ENCODE measurements at regions of chr1 and their contacts with region 1.

Region 1: GRCh38 chr1:181189691-181190363 is 101.3 kb downstream of the IER5 start:
- DNase-seq: peak; percentile 35 to 85 (median 73)
- ATAC-seq: peak; percentile 96
- H3K4me3 ChIP-seq: peak overlapping the region; percentile 20
- H3K4me3 Mint-ChIP-seq: peak overlapping the region; percentile 34
- H3K27ac ChIP-seq: no peak overlapping the region
- H3K27ac Mint-ChIP-seq: no peak overlapping the region
- H3K4me1 ChIP-seq: peaks cover 12% of the 10 kb centered on the region
- H3K4me1 Mint-ChIP-seq: no peaks in the 10 kb centered on the region
- H3K27me3 ChIP-seq: no peaks in the 10 kb centered on the region
- H3K27me3 Mint-ChIP-seq: peaks cover 26% of the 10 kb centered on the region
- CTCF ChIP-seq: peak; percentile 94

Region 2: GRCh38 chr1:180805316-180805715 is 384.5 kb before region 1 on chr1:
- CTCF ChIA-PET with region 1: no interaction called
- POLR2A ChIA-PET with region 1: no interaction called
- intact Hi-C with region 1: no loop called
- DNase-seq: no peak
- ATAC-seq: no peak
- H3K4me3 ChIP-seq: no peak overlapping the region
- H3K4me3 Mint-ChIP-seq: no peak overlapping the region
- H3K27ac ChIP-seq: no peak overlapping the region
- H3K27ac Mint-ChIP-seq: no peak overlapping the region
- H3K4me1 ChIP-seq: no peaks in the 10 kb centered on the region
- H3K4me1 Mint-ChIP-seq: no peaks in the 10 kb centered on the region
- H3K27me3 ChIP-seq: no peaks in the 10 kb centered on the region
- H3K27me3 Mint-ChIP-seq: no peaks in the 10 kb centered on the region
- CTCF ChIP-seq: no peak

Region 3: GRCh38 chr1:181324797-181325616 is 135.2 kb after region 1 on chr1:
- CTCF ChIA-PET with region 1: no interaction called
- POLR2A ChIA-PET with region 1: no interaction called
- intact Hi-C with region 1: loop called in 1 of 2 experiments (anchors 10 kb)
- DNase-seq: peak in 8 of 14 experiments; percentile 8 to 44 (median 30)
- ATAC-seq: peak; percentile 26
- H3K4me3 ChIP-seq: no peak overlapping the region
- H3K4me3 Mint-ChIP-seq: no peak overlapping the region
- H3K27ac ChIP-seq: no peak overlapping the region
- H3K27ac Mint-ChIP-seq: no peak overlapping the region
- H3K4me1 ChIP-seq: peaks cover 7% of the 10 kb centered on the region
- H3K4me1 Mint-ChIP-seq: no peaks in the 10 kb centered on the region
- H3K27me3 ChIP-seq: peaks cover 0 to 10% of the 10 kb centered on the region in 2 experiments
- H3K27me3 Mint-ChIP-seq: peaks cover 4% of the 10 kb centered on the region
- CTCF ChIP-seq: no peak

Region 4: DNA sequence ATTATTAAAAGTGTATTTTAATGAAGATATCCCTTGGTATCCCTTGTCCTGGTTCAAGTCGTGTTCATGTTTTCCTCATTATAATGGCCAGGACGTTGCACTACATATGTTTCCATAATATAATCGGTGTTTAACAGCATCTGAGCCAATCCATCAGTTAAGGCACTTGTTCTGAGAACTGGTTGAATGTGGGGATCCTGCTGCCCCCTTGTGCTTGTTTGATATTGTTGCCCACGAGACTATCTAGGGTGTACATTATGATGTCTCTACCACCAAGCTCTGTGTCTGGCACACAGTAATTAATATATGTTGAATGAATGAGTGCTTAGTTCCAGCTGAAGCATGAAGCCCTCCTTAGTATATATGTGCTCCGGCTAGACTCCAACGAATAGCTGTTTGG is 486.4 kb after region 1 on chr1:
- CTCF ChIA-PET with region 1: no interaction called
- POLR2A ChIA-PET with region 1: no interaction called
- intact Hi-C with region 1: loop called in 1 of 2 experiments (anchors 5 kb)
- DNase-seq: no peak
- ATAC-seq: no peak
- H3K4me3 ChIP-seq: no peak overlapping the region
- H3K4me3 Mint-ChIP-seq: no peak overlapping the region
- H3K27ac ChIP-seq: no peak overlapping the region
- H3K27ac Mint-ChIP-seq: no peak overlapping the region
- H3K4me1 ChIP-seq: no peaks in the 10 kb centered on the region
- H3K4me1 Mint-ChIP-seq: no peaks in the 10 kb centered on the region
- H3K27me3 ChIP-seq: peaks cover 5 to 13% of the 10 kb centered on the region in 2 experiments
- H3K27me3 Mint-ChIP-seq: peaks cover 28% of the 10 kb centered on the region
- CTCF ChIP-seq: no peak

Region 5: DNA sequence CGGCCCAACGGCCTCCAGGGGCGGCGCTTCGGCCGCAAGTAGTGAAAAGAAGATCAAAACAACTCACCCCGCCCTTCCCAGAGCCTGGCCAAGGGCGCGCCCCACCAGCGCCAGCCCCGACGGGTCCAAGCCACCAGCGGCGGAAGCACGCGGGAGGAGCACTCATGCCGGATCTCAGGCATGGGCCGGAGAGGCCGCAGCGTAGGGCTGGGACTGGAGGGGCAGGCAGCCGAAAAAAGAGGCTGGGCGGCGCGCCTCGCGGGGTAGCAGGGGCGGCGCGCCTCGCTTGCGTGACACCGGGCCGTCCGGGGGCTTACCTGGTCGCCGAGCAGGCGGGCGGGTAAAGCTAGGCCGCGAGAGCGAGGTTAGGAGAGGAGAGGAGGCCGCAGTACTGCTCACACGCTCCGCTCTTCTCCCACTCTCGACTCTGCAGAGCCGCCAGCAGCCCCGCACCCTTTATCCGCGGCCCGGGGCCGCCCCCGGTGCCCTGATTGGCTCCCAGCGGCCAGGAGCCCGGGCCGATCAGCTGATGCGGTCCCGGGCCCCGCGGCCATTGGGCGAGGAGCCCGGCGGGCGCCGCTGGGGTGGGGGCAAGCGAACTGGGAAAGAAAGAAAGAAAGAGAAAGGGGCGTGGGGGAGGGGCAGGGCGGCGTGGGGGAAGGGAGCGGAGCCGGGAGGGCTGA is 1201.7 kb after region 1 on chr1 and contains the start of gene GLUL:
- CTCF ChIA-PET with region 1: no interaction called
- POLR2A ChIA-PET with region 1: no interaction called
- intact Hi-C with region 1: loop called in 1 of 2 experiments (anchors 10 kb)
- DNase-seq: peak; percentile 33 to 85 (median 60)
- ATAC-seq: peak; percentile 65
- H3K4me3 ChIP-seq: peak within 1 kb of the TSS; percentile 79
- H3K4me3 Mint-ChIP-seq: peak within 1 kb of the TSS; percentile 94
- H3K27ac ChIP-seq: peak within 1 kb of the TSS in 1 of 2 donors; percentile 17
- H3K27ac Mint-ChIP-seq: peak within 1 kb of the TSS; percentile 83
- H3K4me1 ChIP-seq: peaks cover 27% of the 10 kb centered on the region
- H3K4me1 Mint-ChIP-seq: peaks cover 34% of the 10 kb centered on the region
- H3K27me3 ChIP-seq: no peaks in the 10 kb centered on the region
- H3K27me3 Mint-ChIP-seq: peaks cover 8% of the 10 kb centered on the region
- CTCF ChIP-seq: no peak
- total RNA-seq, gene GLUL: 60.4 to 64.0 TPM